Esophagus muscularis mucosa (tissue), 4 donors: ENCODE measurements at regions of chr20 and their contacts with region 1.

Region 1: DNA sequence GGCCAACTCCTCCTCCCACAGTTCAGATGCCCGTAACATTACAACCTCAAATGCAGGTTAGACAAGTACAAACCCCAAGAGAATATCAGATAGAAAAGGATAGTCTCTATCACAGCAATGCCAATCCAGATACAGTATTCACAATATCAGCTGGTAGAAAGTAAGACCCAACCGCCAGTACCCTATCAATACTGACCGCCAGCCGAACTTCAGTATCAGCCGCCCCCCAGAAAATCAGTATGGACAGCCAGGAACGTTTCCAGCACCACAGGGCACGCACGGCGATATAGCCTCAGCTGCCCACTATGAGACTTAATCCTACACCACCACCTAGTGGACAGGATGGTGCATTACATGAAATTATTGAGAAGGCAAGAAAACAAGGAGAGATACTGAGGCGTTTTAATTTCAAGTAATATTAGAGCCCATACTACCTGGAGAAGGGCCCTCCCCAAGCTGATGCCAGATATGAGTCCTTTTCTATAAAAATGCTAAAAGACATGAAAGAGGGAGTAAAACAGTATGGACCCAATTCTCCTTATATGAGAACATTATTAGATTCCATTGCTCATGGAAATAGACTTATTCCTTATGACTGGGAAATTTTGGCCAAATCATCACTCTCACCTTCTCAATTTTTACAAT is 17.6 kb upstream of the EIF2S2 start:
- DNase-seq: no peak
- H3K4me3 ChIP-seq: peak overlapping the region in 1 of 4 donors; percentile 37
- H3K27ac ChIP-seq: no peak overlapping the region
- H3K4me1 ChIP-seq: peaks cover 3 to 5% (median 4%) of the 10 kb centered on the region in 4 donors
- H3K27me3 ChIP-seq: peaks cover 0 to 7% (median 0%) of the 10 kb centered on the region in 4 donors
- CTCF ChIP-seq: peak; percentile 85 to 87 (median 86)
- EP300 ChIP-seq: no peak
- POLR2A ChIP-seq: no peak

Region 2: GRCh38 chr20:33862709-33863403 is 266.8 kb before region 1 on chr20:
- intact Hi-C with region 1: loop called (anchors 2 kb)
- DNase-seq: no peak
- H3K4me3 ChIP-seq: peak overlapping the region; percentile 6 to 31 (median 22)
- H3K27ac ChIP-seq: no peak overlapping the region
- H3K4me1 ChIP-seq: peaks cover 14 to 25% (median 24%) of the 10 kb centered on the region in 4 donors
- H3K27me3 ChIP-seq: no peaks in the 10 kb centered on the region
- CTCF ChIP-seq: peak; percentile 63 to 80 (median 70)
- EP300 ChIP-seq: no peak
- POLR2A ChIP-seq: no peak

Region 3: GRCh38 chr20:33933469-33933909 is 196.2 kb before region 1 on chr20:
- intact Hi-C with region 1: loop called (anchors 2 kb)
- DNase-seq: no peak
- H3K4me3 ChIP-seq: no peak overlapping the region
- H3K27ac ChIP-seq: peak overlapping the region; percentile 36 to 59 (median 46)
- H3K4me1 ChIP-seq: peaks cover 0 to 7% (median 3%) of the 10 kb centered on the region in 4 donors
- H3K27me3 ChIP-seq: no peaks in the 10 kb centered on the region
- CTCF ChIP-seq: peak; percentile 47 to 72 (median 64)
- EP300 ChIP-seq: no peak
- POLR2A ChIP-seq: no peak

Region 4: GRCh38 chr20:33999025-33999649 is 130.5 kb before region 1 on chr20:
- intact Hi-C with region 1: no loop called
- DNase-seq: no peak
- H3K4me3 ChIP-seq: no peak overlapping the region
- H3K27ac ChIP-seq: no peak overlapping the region
- H3K4me1 ChIP-seq: peaks cover 66 to 92% (median 84%) of the 10 kb centered on the region in 4 donors
- H3K27me3 ChIP-seq: no peaks in the 10 kb centered on the region
- CTCF ChIP-seq: no peak
- EP300 ChIP-seq: no peak
- POLR2A ChIP-seq: no peak